ENCODE measurements at regions of chr17 and their contacts with region 1.

Region 1: GRCh38 chr17:78421484-78422266 is 43.2 kb downstream of the PGS1 start:
- DNase-seq: peak; percentile 55 to 96 (median 81)

Region 2: DNA sequence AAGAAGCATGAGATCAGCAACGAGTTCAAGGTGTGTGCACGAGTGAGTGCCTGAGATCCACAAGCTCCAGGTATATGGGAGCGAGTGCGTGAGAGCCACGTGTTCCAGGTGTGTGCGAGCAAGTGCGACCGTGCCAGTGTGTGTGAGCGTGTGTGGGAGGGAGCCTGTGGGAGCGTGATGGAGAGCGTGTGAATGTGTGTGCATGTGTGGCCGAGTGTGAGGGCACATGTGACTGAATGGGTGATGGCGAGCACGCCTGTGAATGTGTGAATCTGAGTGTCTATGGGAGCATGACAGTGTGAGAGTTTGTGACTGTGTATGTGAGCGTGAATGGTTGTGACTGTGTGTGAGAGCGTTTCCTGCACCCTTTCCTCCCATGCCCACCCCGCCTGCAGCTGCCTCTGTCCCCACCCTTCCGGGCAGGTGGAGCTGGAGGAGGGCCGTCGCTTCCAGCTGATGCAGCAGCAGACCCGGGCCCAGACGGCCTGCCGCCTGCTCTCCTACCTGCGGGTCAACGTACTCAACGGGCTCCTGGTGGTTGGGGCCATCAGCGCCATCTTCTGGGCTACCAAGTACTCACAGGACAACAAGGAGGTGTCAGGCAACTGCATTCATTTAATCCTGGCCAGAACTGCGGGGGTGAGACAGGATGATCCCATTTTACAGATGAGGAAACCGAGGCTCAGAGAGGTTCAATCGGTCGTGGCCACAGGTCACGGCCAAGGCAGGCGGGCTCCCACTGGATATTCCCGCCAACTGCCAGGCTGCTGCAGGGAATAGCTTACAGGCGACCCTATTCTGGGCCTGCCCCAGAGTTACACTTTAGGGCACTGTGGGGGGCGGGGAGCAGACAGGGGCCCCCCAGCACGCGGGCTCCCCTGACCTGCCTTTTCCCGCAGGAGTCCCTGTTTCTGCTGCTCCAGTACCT is 287.4 kb before region 1 on chr17:
- intact Hi-C with region 1: loop called (anchors 10 kb)
- DNase-seq: peak in 3 of 10 donors; percentile 42 to 93 (median 60)

Region 3: GRCh38 chr17:78289802-78290363 is 131.8 kb before region 1 on chr17:
- intact Hi-C with region 1: loop called (anchors 2 kb)
- DNase-seq: peak; percentile 38 to 94 (median 73)

Region 4: DNA sequence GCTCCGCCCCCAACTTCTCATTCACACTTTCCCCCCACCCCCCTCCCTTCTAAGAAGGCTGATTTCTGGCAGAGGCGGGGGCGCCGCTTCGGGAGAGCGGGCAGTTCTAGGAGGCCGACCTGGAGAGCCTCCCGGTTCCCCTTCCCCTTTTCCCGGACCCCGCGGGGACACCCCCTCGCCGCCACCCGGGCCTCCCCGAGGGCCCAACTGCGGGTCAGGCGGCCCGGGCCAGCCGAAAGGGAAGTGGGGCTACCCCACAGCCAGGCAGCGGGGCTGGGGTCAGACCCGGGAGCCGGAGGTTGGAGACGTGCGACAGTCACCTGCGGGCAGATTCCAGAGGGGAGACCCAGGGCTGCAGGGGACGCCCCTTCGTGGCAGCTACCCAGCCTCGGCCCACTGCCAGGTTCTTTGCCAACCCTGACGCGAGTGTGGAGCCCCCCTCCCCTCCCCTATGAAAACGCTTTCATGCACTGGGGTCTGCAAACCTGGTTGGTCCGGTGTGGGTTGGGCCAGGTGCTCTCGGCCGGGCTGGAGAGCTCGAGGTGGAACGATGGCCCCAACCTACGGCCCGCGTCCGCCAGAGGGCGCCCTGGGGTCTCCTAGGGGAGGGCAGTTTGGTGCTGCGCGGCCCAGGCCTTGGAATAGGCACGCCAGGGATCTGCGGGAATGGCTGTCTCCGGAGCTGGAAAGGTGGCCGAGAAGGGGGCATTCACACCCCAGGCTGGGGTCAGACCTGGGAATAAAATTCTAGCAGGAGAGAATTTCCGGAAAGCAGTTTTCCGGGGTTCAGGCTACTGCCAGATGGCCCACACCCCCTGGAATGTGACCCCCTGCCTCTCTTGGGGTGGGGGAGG is 61.1 kb before region 1 on chr17:
- intact Hi-C with region 1: loop called (anchors 5 kb)
- DNase-seq: peak; percentile 65 to 98 (median 88)

Measured in posterior cingulate gyrus (tissue), 11 donors.